Activated naive CD4-positive, alpha-beta T cell treated with anti-CD3 and anti-CD28 coated beads, Interleukin-2, amount 10 ng/mL, durations not matched to agents 7 days and 5 days (primary cell): ENCODE measurements at regions of chr19 and their contacts with region 1.

Region 1: DNA sequence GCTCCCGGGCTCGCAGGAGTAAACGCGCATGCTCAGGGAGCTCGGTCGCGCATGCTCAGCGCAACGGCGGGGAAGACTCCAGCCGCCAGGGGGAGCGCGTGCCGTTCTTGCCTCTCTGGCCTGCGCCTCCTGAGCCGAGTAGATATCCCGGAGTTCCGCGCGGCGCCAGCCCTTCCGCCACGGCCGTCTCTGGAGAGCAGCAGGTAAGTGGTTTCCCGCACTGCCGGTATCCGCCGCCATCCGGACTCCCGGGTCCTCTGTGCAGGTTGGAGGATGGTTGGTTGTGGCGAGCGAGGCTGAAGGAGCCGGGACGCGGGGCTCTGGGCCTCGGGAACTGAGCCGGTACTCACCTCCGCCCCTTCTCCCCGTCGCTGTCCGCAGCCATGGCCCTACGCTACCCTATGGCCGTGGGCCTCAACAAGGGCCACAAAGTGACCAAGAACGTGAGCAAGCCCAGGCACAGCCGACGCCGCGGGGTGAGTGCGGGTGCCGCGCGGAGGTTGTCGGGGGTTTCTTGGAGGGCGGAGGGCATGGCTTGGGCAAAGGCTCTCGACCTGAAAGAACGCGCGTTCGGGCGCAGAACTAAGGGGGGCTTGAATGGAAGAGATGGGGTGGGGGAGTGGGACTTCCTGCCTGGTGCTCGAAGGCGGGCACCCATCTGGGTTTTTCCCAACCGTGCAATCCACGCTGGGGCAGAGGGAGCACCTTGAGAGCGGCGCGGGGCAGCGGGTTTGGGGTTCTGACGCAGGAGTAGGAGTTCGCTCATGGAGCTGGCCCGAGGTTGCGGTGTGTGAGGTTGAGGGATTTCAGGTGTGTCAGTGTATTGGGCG is at the start of gene RPL36:
- DNase-seq: peak; percentile 99
- H3K4me3 Mint-ChIP-seq: peak within 1 kb of the TSS; percentile 95
- H3K27ac Mint-ChIP-seq: peak within 1 kb of the TSS; percentile 92
- H3K4me1 Mint-ChIP-seq: peaks cover 44% of the 10 kb centered on the region
- H3K27me3 Mint-ChIP-seq: peaks cover 12% of the 10 kb centered on the region

Region 2: DNA sequence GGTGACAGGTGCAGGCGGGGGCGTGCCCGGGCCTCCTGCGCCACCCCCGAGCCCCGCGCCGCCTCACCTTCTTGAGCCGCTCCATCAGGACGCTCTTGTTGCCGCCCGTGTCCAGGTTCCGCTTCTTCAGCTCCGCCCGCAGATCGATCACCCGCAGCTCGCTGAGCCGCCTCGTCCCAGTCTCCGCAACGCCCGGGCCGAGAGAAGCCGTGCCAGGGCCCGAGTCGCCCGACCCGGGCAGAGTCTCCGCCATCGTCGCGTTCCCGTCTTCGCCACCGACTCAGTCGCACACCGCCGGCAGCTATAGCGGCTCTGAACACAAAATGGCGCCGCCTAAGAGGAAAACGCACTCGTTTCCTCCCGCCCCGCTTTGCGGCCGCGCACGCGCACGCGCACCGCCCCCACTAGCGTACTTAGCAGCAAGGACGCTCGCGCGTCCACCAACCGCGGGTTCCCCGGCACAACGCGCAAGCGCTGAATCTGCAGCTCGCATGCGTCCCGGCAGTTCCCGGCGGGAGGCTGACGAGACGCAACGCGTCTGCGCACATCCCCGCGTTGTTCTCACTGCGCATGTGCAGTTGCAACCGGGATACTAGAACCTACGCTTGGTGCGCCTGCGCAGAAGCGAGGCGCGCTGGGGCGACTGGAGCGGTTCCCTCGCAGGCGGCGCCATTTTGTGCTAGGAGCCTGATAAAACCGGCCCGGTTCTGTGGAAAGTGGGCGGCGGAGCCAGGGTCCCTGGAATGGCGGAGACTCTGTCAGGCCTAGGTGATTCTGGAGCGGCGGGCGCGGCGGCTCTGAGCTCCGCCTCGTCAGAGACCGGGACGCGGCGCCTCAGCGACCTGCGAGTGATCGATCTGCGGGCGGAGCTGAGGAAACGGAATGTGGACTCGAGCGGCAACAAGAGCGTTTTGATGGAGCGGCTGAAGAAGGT is 67.6 kb before region 1 on chr19 and contains the starts of genes SAFB and SAFB2:
- CTCF ChIA-PET with region 1: interaction called, 15 read pairs
- DNase-seq: peak; percentile 100
- H3K4me3 Mint-ChIP-seq: peak within 1 kb of the TSS; percentile 100
- H3K27ac Mint-ChIP-seq: peak within 1 kb of the TSS; percentile 100
- H3K4me1 Mint-ChIP-seq: peaks cover 67% of the 10 kb centered on the region
- H3K27me3 Mint-ChIP-seq: no peaks in the 10 kb centered on the region

Region 3: GRCh38 chr19:5651361-5651760 is 39.0 kb before region 1 on chr19:
- CTCF ChIA-PET with region 1: no interaction called
- DNase-seq: no peak
- H3K4me3 Mint-ChIP-seq: no peak overlapping the region
- H3K27ac Mint-ChIP-seq: no peak overlapping the region
- H3K4me1 Mint-ChIP-seq: no peaks in the 10 kb centered on the region
- H3K27me3 Mint-ChIP-seq: no peaks in the 10 kb centered on the region

Region 4: DNA sequence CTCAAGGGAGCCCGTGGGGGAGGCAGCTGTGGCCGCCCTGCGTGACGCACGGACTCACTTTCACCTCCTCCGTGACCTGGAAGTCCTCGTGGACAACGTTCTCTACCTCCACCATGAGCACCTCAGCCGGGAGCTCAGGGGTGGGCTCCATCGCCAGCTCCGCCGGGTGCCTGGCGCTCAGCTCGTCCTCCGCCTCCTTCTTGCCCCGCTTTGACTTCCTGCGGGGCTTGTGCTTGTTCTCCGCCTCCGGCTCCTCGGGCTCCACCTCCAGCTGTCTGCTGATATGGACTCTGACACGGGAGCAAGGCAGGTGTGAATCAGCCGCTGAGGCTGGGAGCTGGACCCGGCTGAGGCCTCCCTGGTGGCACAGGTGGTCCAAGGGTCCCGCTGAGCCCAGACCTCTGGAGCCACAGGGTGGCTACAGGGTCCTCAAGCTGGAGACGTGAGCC is 21.4 kb after region 1 on chr19:
- CTCF ChIA-PET with region 1: interaction called, 19 read pairs
- DNase-seq: no peak
- H3K4me3 Mint-ChIP-seq: no peak overlapping the region
- H3K27ac Mint-ChIP-seq: no peak overlapping the region
- H3K4me1 Mint-ChIP-seq: peaks cover 6% of the 10 kb centered on the region
- H3K27me3 Mint-ChIP-seq: no peaks in the 10 kb centered on the region

Region 5: GRCh38 chr19:5719961-5720790 is 29.8 kb after region 1 on chr19 and contains the starts of genes CATSPERD and LONP1:
- CTCF ChIA-PET with region 1: interaction called, 11 read pairs
- DNase-seq: peak; percentile 99
- H3K4me3 Mint-ChIP-seq: peak within 1 kb of the TSS; percentile 93
- H3K27ac Mint-ChIP-seq: peak within 1 kb of the TSS; percentile 98
- H3K4me1 Mint-ChIP-seq: peaks cover 37% of the 10 kb centered on the region
- H3K27me3 Mint-ChIP-seq: peaks cover 6% of the 10 kb centered on the region